ENCODE measurements at regions of chr4 and their contacts with region 1.

Region 1: DNA sequence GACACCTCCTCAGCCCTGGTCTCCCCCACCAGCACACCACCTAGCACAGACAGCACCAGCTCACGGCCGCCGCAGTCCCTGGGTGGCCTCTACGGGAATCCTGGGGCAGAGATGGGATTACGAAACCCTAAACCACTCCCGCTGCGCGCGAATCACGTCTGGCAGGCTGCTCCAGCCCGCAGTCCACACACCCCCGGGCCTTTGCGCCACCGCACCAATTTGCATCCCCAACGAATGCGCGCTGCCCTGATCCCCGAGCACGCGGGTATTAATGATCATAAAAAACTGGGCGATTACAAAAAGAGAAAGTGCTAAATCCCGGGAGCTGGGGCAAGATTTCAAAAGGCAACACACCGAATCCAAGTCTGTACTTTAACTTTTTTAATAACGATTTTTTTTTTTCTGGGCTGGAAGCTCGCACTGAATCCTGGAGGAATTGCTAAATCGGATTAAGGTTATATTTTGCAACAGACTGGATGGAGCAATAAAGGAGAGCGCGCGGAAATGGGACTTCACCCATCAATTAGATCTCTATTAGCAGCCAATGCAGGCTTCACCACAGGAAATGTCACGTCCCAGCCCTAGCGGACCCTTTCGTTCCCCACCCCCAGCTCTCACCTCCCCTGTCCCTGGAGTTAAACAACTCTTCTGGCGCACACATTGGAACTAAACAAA is 69.8 kb upstream of the TMEM33 start:
- DNase-seq: peak; percentile 40
- ATAC-seq: peak; percentile 8; the same call in 1 of the 2 replicates
- H3K4me3 Mint-ChIP-seq: peak overlapping the region; percentile 61
- H3K27ac Mint-ChIP-seq: no peak overlapping the region
- H3K4me1 Mint-ChIP-seq: peaks cover 37% of the 10 kb centered on the region
- H3K27me3 Mint-ChIP-seq: peaks cover 92% of the 10 kb centered on the region
- CTCF ChIP-seq: no peak

Region 2: GRCh38 chr4:41814565-41814964 is 50.9 kb before region 1 on chr4:
- CTCF ChIA-PET with region 1: no interaction called
- POLR2A ChIA-PET with region 1: no interaction called
- DNase-seq: peak; percentile 57
- ATAC-seq: peak; percentile 93
- H3K4me3 Mint-ChIP-seq: no peak overlapping the region
- H3K27ac Mint-ChIP-seq: no peak overlapping the region
- H3K4me1 Mint-ChIP-seq: peaks cover 3% of the 10 kb centered on the region
- H3K27me3 Mint-ChIP-seq: peaks cover 7% of the 10 kb centered on the region; the same call in 1 of the 2 replicates
- CTCF ChIP-seq: no peak

Region 3: GRCh38 chr4:41880022-41880837 is 14.8 kb after region 1 on chr4:
- CTCF ChIA-PET with region 1: interaction called, 16 read pairs
- POLR2A ChIA-PET with region 1: interaction called, 4 read pairs
- DNase-seq: peak; percentile 27
- ATAC-seq: no peak
- H3K4me3 Mint-ChIP-seq: peak overlapping the region; percentile 64
- H3K27ac Mint-ChIP-seq: no peak overlapping the region
- H3K4me1 Mint-ChIP-seq: peaks cover 43% of the 10 kb centered on the region
- H3K27me3 Mint-ChIP-seq: peaks cover 100% of the 10 kb centered on the region
- CTCF ChIP-seq: no peak

Measured in WTC11 (cell line).